A549 (cell line): ENCODE measurements at regions of chr22 and their contacts with region 1.

Region 1: DNA sequence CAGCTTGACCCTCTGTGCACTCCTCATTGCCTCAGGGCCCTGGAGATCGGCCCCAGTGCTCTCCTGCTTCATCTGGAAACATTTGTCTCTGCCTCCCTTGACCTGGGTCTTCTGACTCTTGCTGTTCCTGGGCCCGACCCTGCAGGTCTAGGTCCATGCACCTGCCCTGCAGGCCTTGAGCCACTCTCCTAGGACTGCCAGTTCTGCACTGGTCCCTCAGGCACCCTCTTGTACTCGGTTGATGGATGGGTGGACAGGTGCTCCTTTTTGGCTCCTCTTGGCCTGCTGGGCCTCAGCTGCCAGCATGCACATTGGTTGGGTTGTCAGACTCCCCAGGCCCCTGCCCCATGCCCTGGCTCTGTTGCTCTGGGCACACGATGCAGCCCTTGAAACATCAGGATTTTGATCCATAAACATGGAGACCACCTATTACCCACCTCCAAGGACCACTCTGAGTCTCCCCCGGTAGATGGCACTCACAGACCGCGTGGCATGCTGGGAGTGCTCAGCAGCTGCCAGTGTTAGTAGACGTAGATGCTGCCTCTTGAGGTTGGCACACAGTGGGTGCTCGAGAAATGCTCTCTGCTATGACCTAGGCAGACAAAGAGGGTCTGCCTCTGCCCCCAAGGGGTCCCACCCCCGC is 20.2 kb upstream of the ACR start:
- DNase-seq: no peak
- ATAC-seq: no peak; a peak in 1 of 6 replicates
- H3K4me3 ChIP-seq: no peak overlapping the region
- H3K27ac ChIP-seq: no peak overlapping the region
- H3K4me1 ChIP-seq: no peaks in the 10 kb centered on the region
- CTCF ChIP-seq: no peak
- EP300 ChIP-seq: no peak
- POLR2A ChIP-seq: no peak
- RAD21 ChIP-seq: no peak

Region 2: DNA sequence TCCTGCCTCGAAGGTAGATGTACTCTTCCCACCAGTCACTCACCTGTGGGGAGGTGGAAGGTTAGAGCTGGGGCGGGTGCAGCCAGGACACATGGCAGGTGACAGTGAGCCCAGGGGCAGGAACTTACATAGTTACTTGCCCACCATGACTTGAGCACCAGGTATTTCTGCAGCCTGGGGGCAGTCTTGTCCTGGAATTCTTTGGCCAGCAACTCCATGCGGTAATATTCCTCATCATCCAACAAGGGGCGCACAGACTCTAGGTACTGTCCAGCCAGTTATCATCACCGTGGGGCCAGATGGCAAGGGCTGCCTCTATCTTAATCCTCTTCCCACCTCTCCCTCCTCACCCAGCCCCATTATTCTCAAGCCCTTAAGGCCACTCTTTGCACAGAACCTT is 141.8 kb before region 1 on chr22:
- CTCF ChIA-PET with region 1: no interaction called
- POLR2A ChIA-PET with region 1: no interaction called
- DNase-seq: peak; percentile 20 to 69
- ATAC-seq: peak; percentile 63 to 81; a peak in 5 of 6 replicates
- H3K4me3 ChIP-seq: no peak overlapping the region
- H3K27ac ChIP-seq: no peak overlapping the region
- H3K4me1 ChIP-seq: peaks cover under 1% of the 10 kb centered on the region; the same call in 1 of the 3 replicates
- CTCF ChIP-seq: no peak; the same call in 2 of the 3 replicates
- EP300 ChIP-seq: no peak
- POLR2A ChIP-seq: no peak
- RAD21 ChIP-seq: peak; percentile 28 to 69; a peak in 3 of 5 replicates

Region 3: GRCh38 chr22:50705208-50705691 is 12.6 kb before region 1 on chr22:
- CTCF ChIA-PET with region 1: no interaction called
- POLR2A ChIA-PET with region 1: no interaction called
- DNase-seq: no peak
- ATAC-seq: no peak
- H3K4me3 ChIP-seq: no peak overlapping the region
- H3K27ac ChIP-seq: no peak overlapping the region
- H3K4me1 ChIP-seq: no peaks in the 10 kb centered on the region
- CTCF ChIP-seq: no peak
- EP300 ChIP-seq: no peak
- POLR2A ChIP-seq: no peak
- RAD21 ChIP-seq: no peak

Region 4: GRCh38 chr22:50731811-50732624 is 14.2 kb after region 1 on chr22:
- CTCF ChIA-PET with region 1: interaction called, 10 read pairs
- POLR2A ChIA-PET with region 1: no interaction called
- DNase-seq: peak; percentile 45 to 48
- ATAC-seq: peak; percentile 82 to 91
- H3K4me3 ChIP-seq: no peak overlapping the region
- H3K27ac ChIP-seq: peak overlapping the region; percentile 57 to 82; a peak in 5 of 6 replicates
- H3K4me1 ChIP-seq: no peaks in the 10 kb centered on the region
- CTCF ChIP-seq: peak; percentile 65
- EP300 ChIP-seq: no peak
- POLR2A ChIP-seq: no peak
- RAD21 ChIP-seq: peak; percentile 71 to 75